ENCODE measurements at regions of chr1 and their contacts with region 1.

Region 1: GRCh38 chr1:225548140-225548857 is 104.6 kb downstream of the ENAH start:
- DNase-seq: no peak
- ATAC-seq: no peak
- H3K4me3 ChIP-seq: no peak overlapping the region
- H3K27ac ChIP-seq: no peak overlapping the region
- H3K4me1 ChIP-seq: peaks cover 10% of the 10 kb centered on the region; the same call in 2 of the 3 replicates
- CTCF ChIP-seq: no peak
- EP300 ChIP-seq: no peak
- POLR2A ChIP-seq: no peak
- RAD21 ChIP-seq: no peak

Region 2: DNA sequence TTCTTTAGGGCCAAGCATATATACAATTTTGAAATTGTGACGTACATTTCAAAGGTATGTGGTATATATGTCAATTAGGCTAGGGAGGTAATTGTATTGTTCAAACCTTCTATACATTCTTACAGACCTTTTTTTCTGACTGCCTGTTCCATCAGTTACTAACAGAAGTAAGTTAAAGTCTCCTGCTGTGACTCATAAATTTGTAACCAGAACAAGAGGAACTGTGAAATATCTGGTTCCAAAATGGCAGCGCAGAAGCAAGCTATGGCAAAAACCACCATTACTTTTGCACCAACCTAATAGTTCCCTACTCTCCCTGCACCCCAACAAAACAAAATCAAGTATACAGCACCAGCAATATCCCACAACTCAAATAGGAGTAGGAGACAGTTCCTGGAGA is 11.0 kb after region 1 on chr1:
- CTCF ChIA-PET with region 1: interaction called, 10 read pairs
- POLR2A ChIA-PET with region 1: no interaction called
- DNase-seq: no peak
- ATAC-seq: no peak
- H3K4me3 ChIP-seq: no peak overlapping the region
- H3K27ac ChIP-seq: no peak overlapping the region
- H3K4me1 ChIP-seq: no peaks in the 10 kb centered on the region
- CTCF ChIP-seq: no peak
- EP300 ChIP-seq: no peak
- POLR2A ChIP-seq: no peak
- RAD21 ChIP-seq: no peak